CD4-positive, alpha-beta memory T cell (primary cell): ENCODE measurements at regions of chr17 and their contacts with region 1.

Region 1: GRCh38 chr17:31524926-31525800 is 133.7 kb downstream of the RAB11FIP4 start:
- DNase-seq: peak; percentile 73 to 82 (median 76)
- H3K4me3 ChIP-seq: no peak overlapping the region
- H3K4me3 Mint-ChIP-seq: no peak overlapping the region
- H3K27ac ChIP-seq: no peak overlapping the region
- H3K27ac Mint-ChIP-seq: no peak overlapping the region
- H3K4me1 ChIP-seq: peaks cover 4% of the 10 kb centered on the region
- H3K4me1 Mint-ChIP-seq: peaks cover 0 to 3% (median under 1%) of the 10 kb centered on the region in 4 donors
- H3K27me3 ChIP-seq: no peaks in the 10 kb centered on the region
- H3K27me3 Mint-ChIP-seq: no peaks in the 10 kb centered on the region

Region 2: GRCh38 chr17:31373150-31374093 is 151.7 kb before region 1 on chr17:
- CTCF ChIA-PET with region 1: interaction called, 7 read pairs
- POLR2A ChIA-PET with region 1: no interaction called
- intact Hi-C with region 1: loop called (anchors 1 kb)
- DNase-seq: peak in 4 of 5 donors; percentile 60 to 67 (median 63)
- H3K4me3 ChIP-seq: no peak overlapping the region
- H3K4me3 Mint-ChIP-seq: peak overlapping the region in 1 of 8 donors; percentile 1
- H3K27ac ChIP-seq: no peak overlapping the region
- H3K27ac Mint-ChIP-seq: peak overlapping the region in 1 of 7 donors; percentile 29
- H3K4me1 ChIP-seq: peaks cover 9% of the 10 kb centered on the region
- H3K4me1 Mint-ChIP-seq: peaks cover 11 to 27% (median 20%) of the 10 kb centered on the region in 4 donors
- H3K27me3 ChIP-seq: no peaks in the 10 kb centered on the region
- H3K27me3 Mint-ChIP-seq: no peaks in the 10 kb centered on the region

Region 3: DNA sequence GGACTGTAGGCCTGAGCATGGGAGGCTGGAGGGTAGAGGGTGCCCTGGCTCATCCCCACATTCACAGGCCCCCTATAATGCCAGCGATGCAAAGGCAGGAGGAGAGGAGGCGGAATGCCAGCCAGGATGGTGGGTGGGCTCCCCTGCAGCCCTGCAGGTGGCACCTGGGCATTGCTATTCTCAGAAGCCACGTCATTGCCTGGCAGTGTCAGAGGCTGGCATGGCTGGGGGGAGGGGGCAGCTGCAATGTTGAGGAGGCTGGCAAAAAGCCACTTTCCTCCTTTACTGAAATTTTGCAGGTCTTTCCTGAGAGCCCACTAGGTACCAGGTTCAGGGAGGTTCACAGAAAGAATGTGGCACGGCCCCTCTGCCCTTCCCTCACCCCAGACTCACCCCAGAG is 97.5 kb before region 1 on chr17:
- CTCF ChIA-PET with region 1: interaction called, 184 read pairs
- POLR2A ChIA-PET with region 1: no interaction called
- intact Hi-C with region 1: no loop called
- DNase-seq: no peak
- H3K4me3 ChIP-seq: no peak overlapping the region
- H3K4me3 Mint-ChIP-seq: no peak overlapping the region
- H3K27ac ChIP-seq: no peak overlapping the region
- H3K27ac Mint-ChIP-seq: no peak overlapping the region
- H3K4me1 ChIP-seq: peaks cover 3% of the 10 kb centered on the region
- H3K4me1 Mint-ChIP-seq: peaks cover 2 to 3% (median 2%) of the 10 kb centered on the region in 4 donors
- H3K27me3 ChIP-seq: no peaks in the 10 kb centered on the region
- H3K27me3 Mint-ChIP-seq: peaks cover 8 to 18% of the 10 kb centered on the region in 2 donors

Region 4: DNA sequence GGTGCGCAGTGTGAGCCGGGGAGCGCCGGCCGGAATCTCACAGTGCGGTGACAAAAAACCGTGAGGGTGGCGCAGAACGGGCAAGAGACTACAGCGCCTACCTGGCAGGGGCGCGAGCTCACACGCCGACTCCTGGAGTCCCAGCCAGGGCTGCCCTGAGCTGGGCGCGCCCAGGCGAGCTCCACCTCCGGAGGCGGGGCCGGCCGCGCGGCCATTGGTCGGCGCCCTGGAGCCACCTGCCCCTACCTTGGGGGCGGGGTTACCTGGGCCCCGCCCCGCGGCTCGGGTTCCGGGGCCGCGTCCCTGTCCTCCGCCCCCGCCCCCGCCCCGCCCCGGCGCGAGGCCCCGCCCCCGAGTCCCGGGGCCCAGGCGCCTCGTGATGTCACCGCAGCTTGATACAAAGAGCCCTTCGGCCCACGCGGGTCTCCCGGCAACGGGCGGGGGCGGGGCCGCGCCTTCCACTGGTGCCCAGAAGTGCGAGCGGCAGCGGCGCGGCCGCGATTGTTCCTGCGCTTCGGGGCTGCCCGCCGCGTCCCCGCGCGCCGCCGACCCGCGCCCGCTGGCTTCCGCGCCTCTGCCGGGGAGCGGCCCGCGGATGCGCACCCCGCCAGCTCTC is 37.4 kb before region 1 on chr17:
- CTCF ChIA-PET with region 1: interaction called, 8 read pairs
- POLR2A ChIA-PET with region 1: interaction called, 7 read pairs
- intact Hi-C with region 1: loop called (anchors 1 kb)
- DNase-seq: peak; percentile 93 to 96 (median 93)
- H3K4me3 ChIP-seq: peak overlapping the region; percentile 68 to 73
- H3K4me3 Mint-ChIP-seq: peak overlapping the region; percentile 85 to 95 (median 89)
- H3K27ac ChIP-seq: peak overlapping the region; percentile 79
- H3K27ac Mint-ChIP-seq: peak overlapping the region; percentile 91 to 97 (median 95)
- H3K4me1 ChIP-seq: peaks cover 48% of the 10 kb centered on the region
- H3K4me1 Mint-ChIP-seq: peaks cover 37 to 52% (median 46%) of the 10 kb centered on the region in 4 donors
- H3K27me3 ChIP-seq: no peaks in the 10 kb centered on the region
- H3K27me3 Mint-ChIP-seq: no peaks in the 10 kb centered on the region

Region 5: DNA sequence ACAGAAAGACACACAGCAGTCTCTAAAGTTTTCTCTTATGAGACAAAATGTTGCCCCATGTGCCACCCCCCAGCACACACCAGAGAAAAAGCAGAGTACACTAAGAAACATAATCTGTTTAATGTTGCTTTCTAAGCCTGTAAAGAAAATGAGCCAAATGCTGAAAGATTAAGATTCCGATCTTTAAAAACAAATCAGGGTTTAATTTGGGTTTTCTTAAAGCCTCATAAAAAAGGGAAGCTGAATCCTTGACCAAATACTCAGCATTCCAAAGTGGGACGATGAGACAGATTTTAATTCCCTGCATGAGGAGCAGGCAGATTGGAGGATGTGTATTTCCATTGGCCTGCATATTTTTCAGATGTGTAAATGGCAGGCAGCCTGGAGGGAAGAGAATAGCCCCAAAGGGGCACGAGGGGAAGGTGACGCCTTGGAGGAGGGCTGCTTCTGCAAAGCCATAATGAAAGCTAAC is 215.5 kb after region 1 on chr17:
- CTCF ChIA-PET with region 1: no interaction called
- POLR2A ChIA-PET with region 1: no interaction called
- intact Hi-C with region 1: no loop called
- DNase-seq: no peak
- H3K4me3 ChIP-seq: no peak overlapping the region
- H3K4me3 Mint-ChIP-seq: no peak overlapping the region
- H3K27ac ChIP-seq: no peak overlapping the region
- H3K27ac Mint-ChIP-seq: no peak overlapping the region
- H3K4me1 ChIP-seq: no peaks in the 10 kb centered on the region
- H3K4me1 Mint-ChIP-seq: peaks cover 0 to 7% (median 0%) of the 10 kb centered on the region in 4 donors
- H3K27me3 ChIP-seq: no peaks in the 10 kb centered on the region
- H3K27me3 Mint-ChIP-seq: peaks cover 19 to 36% of the 10 kb centered on the region in 2 donors

Region 6: DNA sequence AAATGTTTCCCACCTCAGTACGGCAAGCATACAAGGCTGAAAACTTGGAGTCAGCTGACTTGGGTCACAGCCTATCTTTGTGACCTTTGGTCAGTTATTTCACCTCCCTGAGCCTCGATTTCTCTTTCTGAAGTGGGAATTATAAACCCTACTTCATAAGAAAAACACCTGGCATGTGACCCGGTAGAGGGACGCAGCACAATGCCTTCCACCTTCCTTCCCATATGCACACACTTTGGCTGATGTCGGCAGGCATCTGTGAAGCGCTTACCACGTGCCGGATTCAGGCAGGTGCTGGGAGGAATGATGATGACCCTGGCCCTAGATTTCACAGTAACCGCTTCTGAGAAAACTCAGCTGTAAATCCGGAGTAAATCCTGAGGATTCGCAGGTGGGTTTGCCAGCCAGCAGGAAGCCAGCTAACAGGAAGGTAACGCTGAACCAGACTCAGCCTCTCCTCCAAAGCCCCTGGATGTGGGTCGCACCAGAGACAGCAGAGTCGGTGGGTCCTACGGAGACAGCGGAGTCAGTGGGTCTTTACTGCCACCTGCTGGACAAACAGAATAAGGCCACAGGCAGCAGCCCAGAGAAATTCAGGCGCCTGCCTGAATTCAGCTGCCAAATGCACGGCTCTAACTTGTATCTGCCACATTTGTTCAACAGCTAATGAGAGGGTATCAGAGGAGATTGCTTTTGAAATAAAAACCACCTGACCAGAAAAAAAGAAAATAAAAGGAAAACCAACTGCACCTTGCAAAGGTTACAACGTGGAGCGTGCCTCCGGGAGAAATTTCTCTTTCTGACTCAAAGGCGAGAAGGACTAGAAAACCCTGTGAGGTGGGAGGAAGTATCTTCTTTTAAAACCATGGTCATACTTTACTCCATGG is 317.3 kb after region 1 on chr17:
- CTCF ChIA-PET with region 1: interaction called, 15 read pairs
- POLR2A ChIA-PET with region 1: no interaction called
- intact Hi-C with region 1: loop called (anchors 2 kb)
- DNase-seq: peak; percentile 53 to 60 (median 58)
- H3K4me3 ChIP-seq: no peak overlapping the region
- H3K4me3 Mint-ChIP-seq: no peak overlapping the region
- H3K27ac ChIP-seq: no peak overlapping the region
- H3K27ac Mint-ChIP-seq: no peak overlapping the region
- H3K4me1 ChIP-seq: peaks cover 6% of the 10 kb centered on the region
- H3K4me1 Mint-ChIP-seq: no peaks in the 10 kb centered on the region
- H3K27me3 ChIP-seq: no peaks in the 10 kb centered on the region
- H3K27me3 Mint-ChIP-seq: peaks cover 8 to 17% of the 10 kb centered on the region in 2 donors